PC-9 (cell line): ENCODE measurements at regions of chrX and their contacts with region 1.

Region 1: DNA sequence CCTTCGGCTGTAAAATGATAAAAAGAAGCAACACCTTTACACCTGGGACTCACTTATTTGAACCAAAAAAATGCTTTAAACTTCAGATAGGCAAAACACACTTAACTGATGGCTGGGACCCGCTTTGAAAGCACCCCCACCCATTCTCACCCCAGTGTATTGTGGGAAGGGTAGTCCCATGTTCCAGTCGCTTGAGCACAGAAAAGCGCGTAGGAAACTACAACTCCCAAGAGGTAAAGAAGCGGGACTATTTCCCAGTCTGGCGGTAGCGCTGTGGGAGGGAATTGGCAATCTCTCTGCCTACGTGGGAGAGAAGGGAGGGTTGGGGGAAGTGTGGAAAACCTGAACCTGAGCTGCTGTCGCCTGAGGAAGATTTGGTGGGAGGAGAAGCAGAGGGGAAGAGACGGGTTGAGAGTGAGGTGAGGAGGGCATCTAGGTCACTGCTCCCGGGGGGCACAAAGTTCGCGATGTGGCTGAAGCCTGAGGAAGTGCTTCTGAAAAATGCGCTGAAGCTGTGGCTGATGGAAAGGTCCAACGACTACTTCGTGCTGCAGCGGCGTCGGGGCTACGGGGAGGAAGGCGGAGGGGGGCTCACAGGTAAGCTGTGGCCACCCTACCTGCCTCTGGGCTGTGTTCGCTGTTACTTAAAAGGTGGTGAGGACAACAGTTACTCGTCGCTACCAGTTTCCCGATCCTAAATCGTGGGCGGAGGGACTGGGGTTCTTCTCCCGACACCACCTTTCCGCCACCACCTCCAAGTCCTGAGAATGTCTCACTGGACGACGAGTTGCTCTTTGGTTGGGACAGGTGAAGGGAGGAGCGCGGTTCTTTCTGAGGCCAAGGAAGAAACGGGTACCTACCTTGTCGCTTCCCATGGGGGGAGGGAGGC is at the start of gene TBC1D8B:
- DNase-seq: peak; percentile 72 to 90
- H3K4me3 ChIP-seq: peak within 1 kb of the TSS; percentile 77
- H3K27ac ChIP-seq: peak within 1 kb of the TSS; percentile 50
- H3K4me1 ChIP-seq: peaks cover 7% of the 10 kb centered on the region; the same call in 1 of the 2 replicates
- H3K27me3 ChIP-seq: no peaks in the 10 kb centered on the region
- CTCF ChIP-seq: no peak
- total RNA-seq, gene TBC1D8B: 2.8 and 5.3 TPM in 2 replicates

Region 2: DNA sequence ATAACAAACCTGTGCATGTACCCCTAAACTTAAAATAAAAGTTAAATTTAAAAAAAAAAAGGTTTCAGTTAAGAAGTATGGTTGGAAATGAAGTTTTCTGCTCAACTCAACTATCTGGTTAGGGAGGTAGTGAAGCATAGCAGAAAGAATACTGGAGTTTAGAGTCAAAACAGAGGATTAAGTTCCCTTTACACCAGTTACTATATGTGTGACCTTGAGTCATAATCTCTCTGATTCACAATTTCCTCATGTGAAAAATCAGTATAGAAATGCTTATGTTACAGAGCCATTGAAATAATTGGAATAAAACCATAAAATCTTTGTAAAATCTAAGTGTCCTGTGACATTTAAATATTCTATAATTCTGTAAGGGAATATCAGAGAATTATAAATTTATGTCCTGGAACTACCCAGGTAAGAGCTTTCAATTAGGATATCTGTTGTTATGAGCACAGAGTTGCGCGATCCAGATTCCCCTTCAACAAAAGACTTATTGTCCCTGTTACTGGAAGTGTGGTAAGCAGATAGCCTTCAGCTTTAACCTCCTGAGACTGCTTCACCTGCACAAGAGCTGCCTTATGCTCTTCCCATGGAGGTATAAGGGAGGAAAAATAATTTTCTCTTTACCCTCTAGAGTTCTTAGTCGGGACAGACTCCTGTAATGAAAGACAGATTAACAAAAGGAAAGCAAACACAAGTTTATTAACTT is 1184.1 kb before region 1 on chrX:
- CTCF ChIA-PET with region 1: no interaction called
- POLR2A ChIA-PET with region 1: interaction called, 12 read pairs
- intact Hi-C with region 1: no loop called
- DNase-seq: no peak
- H3K4me3 ChIP-seq: no peak overlapping the region
- H3K27ac ChIP-seq: no peak overlapping the region
- H3K4me1 ChIP-seq: no peaks in the 10 kb centered on the region
- H3K27me3 ChIP-seq: no peaks in the 10 kb centered on the region
- CTCF ChIP-seq: no peak

Region 3: GRCh38 chrX:106894392-106894909 is 91.8 kb after region 1 on chrX:
- CTCF ChIA-PET with region 1: no interaction called
- POLR2A ChIA-PET with region 1: no interaction called
- intact Hi-C with region 1: no loop called
- DNase-seq: peak; percentile 56 to 68
- H3K4me3 ChIP-seq: no peak overlapping the region
- H3K27ac ChIP-seq: peak overlapping the region; percentile 62
- H3K4me1 ChIP-seq: peaks cover 35% of the 10 kb centered on the region
- H3K27me3 ChIP-seq: no peaks in the 10 kb centered on the region
- CTCF ChIP-seq: peak; percentile 86

Region 4: DNA sequence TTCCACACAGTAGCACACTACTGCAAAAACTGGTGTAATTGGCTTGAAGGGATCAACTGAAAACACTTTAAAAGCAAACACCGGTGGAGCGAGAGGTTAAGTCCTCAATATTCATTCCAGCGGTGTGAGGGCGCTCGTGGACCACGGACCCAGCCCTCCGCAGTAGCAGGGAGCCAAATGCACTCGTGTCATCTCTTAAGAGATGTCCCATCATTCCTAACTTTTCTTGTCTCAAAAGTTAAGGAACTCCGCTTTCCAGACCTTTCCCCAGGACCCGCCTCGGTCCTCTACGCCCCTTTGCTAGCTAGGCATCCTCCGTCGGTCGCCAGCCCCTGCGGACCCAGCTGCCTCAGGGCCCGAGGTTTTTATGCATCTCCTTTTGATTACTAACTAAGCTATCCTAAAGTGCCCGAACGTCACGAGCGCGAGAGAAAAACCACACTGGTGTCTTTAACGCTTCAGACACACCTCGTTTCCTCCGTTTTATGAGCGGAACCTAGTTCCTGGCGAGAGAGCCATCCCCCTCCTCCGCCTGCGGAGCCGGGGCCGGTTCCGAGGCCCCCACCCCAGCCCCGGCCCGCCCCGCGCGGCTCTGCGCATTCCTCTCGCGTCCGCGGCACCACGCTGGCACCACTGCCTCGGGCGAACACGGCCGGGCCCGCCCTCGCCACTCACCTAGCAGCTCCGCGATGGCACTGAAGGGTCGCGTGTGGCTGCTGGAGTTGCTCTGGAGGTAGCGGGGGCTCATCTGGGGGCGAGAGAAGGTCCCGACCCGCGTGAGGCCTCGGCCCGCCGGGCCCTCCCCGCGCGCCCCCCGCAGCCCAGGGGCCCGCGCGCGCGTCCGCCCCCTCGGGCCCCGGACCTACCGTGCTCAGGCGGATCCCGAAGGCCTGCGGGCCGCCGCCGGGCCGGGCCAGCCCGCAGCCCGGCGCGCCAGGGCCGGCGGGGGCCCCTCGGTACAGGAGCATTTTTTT is 196.7 kb after region 1 on chrX:
- CTCF ChIA-PET with region 1: no interaction called
- POLR2A ChIA-PET with region 1: no interaction called
- intact Hi-C with region 1: loop called (anchors 1 kb)
- DNase-seq: peak; percentile 47 to 48
- H3K4me3 ChIP-seq: peak overlapping the region; percentile 75
- H3K27ac ChIP-seq: no peak overlapping the region
- H3K4me1 ChIP-seq: 0 out of 2 replicates have a peak, but pooled peaks cover 6% of the 10 kb centered on the region
- H3K27me3 ChIP-seq: no peaks in the 10 kb centered on the region
- CTCF ChIP-seq: peak; percentile 66

Region 5: GRCh38 chrX:108447303-108447702 is 1644.7 kb after region 1 on chrX:
- CTCF ChIA-PET with region 1: no interaction called
- POLR2A ChIA-PET with region 1: interaction called, 10 read pairs
- intact Hi-C with region 1: no loop called
- DNase-seq: peak in 1 of 2 experiments; percentile 77
- H3K4me3 ChIP-seq: no peak overlapping the region
- H3K27ac ChIP-seq: no peak overlapping the region
- H3K4me1 ChIP-seq: peaks cover 25% of the 10 kb centered on the region
- H3K27me3 ChIP-seq: no peaks in the 10 kb centered on the region
- CTCF ChIP-seq: no peak